Activated B cell treated with CpG ODN at 0.5 μM for 24 hours (primary cell): ENCODE measurements at regions of chr3 and their contacts with region 1.

Region 1: GRCh38 chr3:10026084-10026890 is at the start of gene FANCD2:
- DNase-seq: peak; percentile 97
- ATAC-seq: peak; percentile 86
- H3K4me3 Mint-ChIP-seq: peak within 1 kb of the TSS; percentile 96
- H3K27ac Mint-ChIP-seq: peak within 1 kb of the TSS; percentile 96
- H3K4me1 Mint-ChIP-seq: peaks cover 37% of the 10 kb centered on the region
- H3K27me3 Mint-ChIP-seq: no peaks in the 10 kb centered on the region
- CTCF ChIP-seq: no peak
- total RNA-seq, gene FANCD2: 26.8 and 31.4 TPM in 2 replicates

Region 2: GRCh38 chr3:9231006-9231405 is 795.3 kb before region 1 on chr3:
- CTCF ChIA-PET with region 1: no interaction called
- POLR2A ChIA-PET with region 1: no interaction called
- intact Hi-C with region 1: no loop called
- DNase-seq: no peak
- ATAC-seq: no peak
- H3K4me3 Mint-ChIP-seq: no peak overlapping the region
- H3K27ac Mint-ChIP-seq: no peak overlapping the region
- H3K4me1 Mint-ChIP-seq: no peaks in the 10 kb centered on the region
- H3K27me3 Mint-ChIP-seq: peaks cover 4% of the 10 kb centered on the region
- CTCF ChIP-seq: no peak

Region 3: GRCh38 chr3:9536212-9536611 is 490.1 kb before region 1 on chr3:
- CTCF ChIA-PET with region 1: no interaction called
- POLR2A ChIA-PET with region 1: no interaction called
- intact Hi-C with region 1: no loop called
- DNase-seq: no peak
- ATAC-seq: no peak
- H3K4me3 Mint-ChIP-seq: no peak overlapping the region
- H3K27ac Mint-ChIP-seq: no peak overlapping the region
- H3K4me1 Mint-ChIP-seq: no peaks in the 10 kb centered on the region
- H3K27me3 Mint-ChIP-seq: peaks cover 2% of the 10 kb centered on the region
- CTCF ChIP-seq: no peak

Region 4: DNA sequence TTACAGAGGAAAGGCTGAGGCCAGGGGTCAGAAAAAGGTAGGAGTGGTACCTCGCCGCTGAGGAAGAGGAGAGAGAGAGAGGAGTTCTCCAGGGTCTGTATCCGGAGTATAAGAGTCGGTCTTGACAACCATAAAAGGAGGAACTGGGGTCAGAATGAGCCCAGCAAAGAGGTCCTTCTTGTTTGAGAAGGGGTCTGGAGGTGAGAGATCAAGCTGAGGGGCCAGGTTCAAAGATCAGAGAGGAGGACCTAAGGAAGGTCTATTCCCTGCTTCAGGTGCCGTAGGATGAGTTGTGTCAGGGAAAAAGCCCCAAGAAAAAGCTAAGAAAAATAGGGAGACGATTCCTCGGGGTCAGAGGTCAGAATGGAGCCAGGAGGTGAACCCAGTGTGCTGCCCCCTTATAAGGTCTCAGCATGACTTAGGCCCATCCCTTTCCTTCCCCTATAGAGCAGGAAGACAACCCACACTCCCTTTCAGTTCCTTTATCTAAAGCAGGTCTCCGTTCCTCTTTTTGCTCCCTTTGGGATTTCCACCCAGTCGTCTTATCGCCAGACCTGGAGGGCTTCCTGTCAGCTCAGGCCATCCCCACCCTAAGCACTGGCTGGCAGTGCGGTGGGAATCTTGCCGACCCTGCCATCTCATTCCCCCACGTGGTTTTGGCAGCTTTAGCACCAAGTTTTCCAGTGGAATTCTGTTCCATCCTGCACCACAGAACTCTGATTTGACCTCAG is 376.3 kb before region 1 on chr3:
- CTCF ChIA-PET with region 1: no interaction called
- POLR2A ChIA-PET with region 1: no interaction called
- intact Hi-C with region 1: loop called (anchors 1 kb)
- DNase-seq: peak; percentile 25
- ATAC-seq: peak; percentile 59
- H3K4me3 Mint-ChIP-seq: peak overlapping the region; percentile 94
- H3K27ac Mint-ChIP-seq: peak overlapping the region; percentile 84
- H3K4me1 Mint-ChIP-seq: peaks cover 54% of the 10 kb centered on the region
- H3K27me3 Mint-ChIP-seq: no peaks in the 10 kb centered on the region
- CTCF ChIP-seq: no peak

Region 5: GRCh38 chr3:9843715-9844438 is 182.4 kb before region 1 on chr3 and contains the start of gene RPUSD3:
- CTCF ChIA-PET with region 1: no interaction called
- POLR2A ChIA-PET with region 1: no interaction called
- intact Hi-C with region 1: loop called (anchors 1 kb)
- DNase-seq: peak; percentile 95
- ATAC-seq: peak; percentile 100
- H3K4me3 Mint-ChIP-seq: peak within 1 kb of the TSS; percentile 98
- H3K27ac Mint-ChIP-seq: peak within 1 kb of the TSS; percentile 86
- H3K4me1 Mint-ChIP-seq: peaks cover 20% of the 10 kb centered on the region
- H3K27me3 Mint-ChIP-seq: no peaks in the 10 kb centered on the region
- CTCF ChIP-seq: no peak
- total RNA-seq, gene RPUSD3: 49.5 and 55.7 TPM in 2 replicates

Region 6: DNA sequence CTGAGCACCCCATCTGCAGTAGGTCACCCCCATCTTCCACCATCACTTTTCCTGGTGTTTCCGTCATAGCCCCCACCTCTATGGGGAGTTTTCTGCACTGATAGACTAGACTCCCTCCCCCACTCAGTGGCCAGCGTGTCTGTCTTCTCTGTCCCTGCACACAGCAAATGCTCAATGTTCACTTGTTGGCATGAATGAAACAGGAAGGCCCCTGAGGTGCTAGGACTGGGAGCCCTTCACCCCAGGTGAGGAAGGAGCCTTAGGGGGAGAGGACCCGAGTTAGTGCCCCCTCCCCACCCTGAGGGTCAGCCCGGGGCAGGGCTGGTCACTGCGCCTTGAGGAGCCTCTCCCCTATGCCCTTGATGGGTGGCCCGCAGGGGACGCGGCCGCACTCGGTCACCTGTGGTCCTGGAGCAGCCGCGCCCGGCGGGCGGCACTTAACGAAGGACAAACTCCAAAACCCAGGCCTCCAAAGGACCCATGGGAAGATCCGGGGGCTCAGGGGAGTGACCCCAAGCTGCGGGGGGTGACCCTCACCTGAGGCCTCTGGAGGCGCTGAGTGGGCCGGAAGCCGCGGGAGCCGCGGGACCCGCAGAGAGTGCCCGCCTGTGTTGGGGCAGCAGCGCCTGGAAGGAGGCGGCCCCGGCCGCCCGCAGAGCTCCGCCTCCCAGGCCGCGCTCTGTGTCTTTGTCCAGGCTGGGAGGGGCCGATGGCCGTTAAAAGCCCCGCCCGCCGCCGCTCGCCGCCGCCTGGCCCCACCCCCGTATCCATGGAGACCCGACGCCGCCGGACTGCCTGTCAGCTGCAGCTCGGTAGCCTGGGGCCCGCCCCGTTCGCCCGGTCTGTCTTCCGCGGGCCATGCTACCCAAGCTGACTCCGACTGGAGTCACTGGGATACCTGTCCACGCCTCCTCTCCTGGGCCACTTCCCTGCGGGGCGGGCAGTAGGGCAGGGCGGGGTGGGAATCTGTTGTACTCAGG is 15.5 kb before region 1 on chr3:
- CTCF ChIA-PET with region 1: no interaction called
- POLR2A ChIA-PET with region 1: interaction called, 14 read pairs
- intact Hi-C with region 1: loop called (anchors 1 kb)
- DNase-seq: peak; percentile 86
- ATAC-seq: peak; percentile 86
- H3K4me3 Mint-ChIP-seq: peak overlapping the region; percentile 65
- H3K27ac Mint-ChIP-seq: peak overlapping the region; percentile 1
- H3K4me1 Mint-ChIP-seq: peaks cover 23% of the 10 kb centered on the region
- H3K27me3 Mint-ChIP-seq: no peaks in the 10 kb centered on the region
- CTCF ChIP-seq: no peak

Region 7: DNA sequence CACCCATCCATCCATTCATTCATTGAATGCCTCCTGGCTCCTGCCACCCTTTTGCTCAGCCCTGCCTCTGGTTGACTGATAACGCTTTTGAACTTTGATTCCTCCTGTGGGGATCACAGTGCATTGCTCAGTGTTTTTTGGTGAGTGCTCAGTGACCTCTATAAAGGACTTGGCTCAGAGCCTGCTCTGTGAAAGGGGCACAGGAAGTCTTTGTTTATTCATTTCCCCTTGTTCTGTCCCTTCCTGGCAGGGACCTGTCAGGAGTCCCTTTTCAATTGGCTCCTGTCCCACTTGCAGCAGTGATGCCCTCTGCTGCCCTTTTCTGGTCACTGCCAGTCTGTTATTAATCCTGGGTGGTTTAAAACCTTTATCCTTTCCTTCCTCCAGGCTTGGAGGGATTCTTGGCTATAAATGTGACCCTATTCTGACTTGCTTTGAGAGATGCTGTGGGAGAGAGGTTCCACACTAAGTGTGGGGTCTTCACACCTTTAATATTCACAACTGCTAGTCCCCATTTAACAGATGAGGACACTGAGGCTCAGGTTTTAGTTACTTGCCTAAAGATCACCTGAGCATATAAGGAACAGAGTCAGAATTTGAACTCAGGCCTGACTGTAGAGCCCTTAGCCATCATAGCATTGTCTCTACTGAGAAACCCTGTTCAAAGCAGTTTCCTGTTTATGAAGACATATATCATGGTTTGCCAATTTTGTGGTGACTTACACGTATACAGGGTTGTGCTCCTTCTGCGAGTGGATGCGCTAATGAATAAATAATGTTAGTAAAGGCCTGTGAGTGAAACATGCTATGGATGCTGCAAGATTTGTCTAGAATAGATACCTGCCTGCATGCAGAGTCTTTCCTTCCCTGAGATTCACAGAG is 198.7 kb after region 1 on chr3:
- CTCF ChIA-PET with region 1: no interaction called
- POLR2A ChIA-PET with region 1: no interaction called
- intact Hi-C with region 1: loop called (anchors 1 kb)
- DNase-seq: peak; percentile 32
- ATAC-seq: peak; percentile 63
- H3K4me3 Mint-ChIP-seq: peak overlapping the region; percentile 48
- H3K27ac Mint-ChIP-seq: peak overlapping the region; percentile 61
- H3K4me1 Mint-ChIP-seq: peaks cover 65% of the 10 kb centered on the region
- H3K27me3 Mint-ChIP-seq: no peaks in the 10 kb centered on the region
- CTCF ChIP-seq: peak; percentile 85